Activated CD4-positive, alpha-beta memory T cell treated with anti-CD3 and anti-CD28 coated beads, Interleukin-2, amount 10 ng/mL, durations not matched to agents 7 days and 5 days (primary cell): ENCODE measurements at regions of chr19 and their contacts with region 1.

Region 1: GRCh38 chr19:48351341-48351752 is 12.4 kb downstream of the TMEM143 start:
- DNase-seq: peak; percentile 86
- H3K4me3 Mint-ChIP-seq: no peak overlapping the region
- H3K27ac Mint-ChIP-seq: no peak overlapping the region
- H3K4me1 Mint-ChIP-seq: peaks cover 5% of the 10 kb centered on the region
- H3K27me3 Mint-ChIP-seq: no peaks in the 10 kb centered on the region

Region 2: DNA sequence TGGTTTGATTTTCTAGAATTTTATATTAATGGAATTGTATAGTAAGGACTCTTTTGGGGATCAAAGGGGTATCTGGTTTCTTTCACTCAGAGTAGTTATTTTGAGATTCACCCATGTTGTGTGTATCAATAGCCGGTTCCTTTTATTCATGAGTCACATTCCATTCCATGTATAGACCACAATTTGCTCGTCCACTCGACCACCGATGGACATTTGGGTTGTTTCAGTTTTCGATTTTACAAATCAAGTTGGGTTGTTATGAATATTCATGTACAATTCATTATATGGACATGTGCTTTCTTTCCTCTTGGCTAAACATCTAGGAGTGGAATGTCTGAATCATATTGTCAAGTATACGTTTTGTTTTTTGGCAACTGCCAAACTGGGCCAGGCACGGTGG is 35.6 kb before region 1 on chr19:
- CTCF ChIA-PET with region 1: interaction called, 10 read pairs
- POLR2A ChIA-PET with region 1: no interaction called
- DNase-seq: no peak
- H3K4me3 Mint-ChIP-seq: no peak overlapping the region
- H3K27ac Mint-ChIP-seq: no peak overlapping the region
- H3K4me1 Mint-ChIP-seq: peaks cover 12% of the 10 kb centered on the region
- H3K27me3 Mint-ChIP-seq: no peaks in the 10 kb centered on the region

Region 3: GRCh38 chr19:48363810-48364563 is 12.6 kb after region 1 on chr19 and contains the starts of genes SYNGR4 and TMEM143:
- CTCF ChIA-PET with region 1: interaction called, 20 read pairs
- POLR2A ChIA-PET with region 1: interaction called, 9 read pairs
- DNase-seq: peak; percentile 99
- H3K4me3 Mint-ChIP-seq: peak within 1 kb of the TSS; percentile 82
- H3K27ac Mint-ChIP-seq: peak within 1 kb of the TSS; percentile 95
- H3K4me1 Mint-ChIP-seq: peaks cover 22% of the 10 kb centered on the region
- H3K27me3 Mint-ChIP-seq: no peaks in the 10 kb centered on the region
- total RNA-seq, gene SYNGR4: 0.28 TPM in 1 of 2 experiments, not detected in the other
- total RNA-seq, gene TMEM143: 17.4 to 18.2 TPM

Region 4: GRCh38 chr19:48480558-48481500 is 129.5 kb after region 1 on chr19:
- CTCF ChIA-PET with region 1: no interaction called
- POLR2A ChIA-PET with region 1: no interaction called
- DNase-seq: peak; percentile 72
- H3K4me3 Mint-ChIP-seq: peak overlapping the region; percentile 61
- H3K27ac Mint-ChIP-seq: peak overlapping the region; percentile 64
- H3K4me1 Mint-ChIP-seq: peaks cover 26% of the 10 kb centered on the region
- H3K27me3 Mint-ChIP-seq: no peaks in the 10 kb centered on the region